K562 (cell line): ENCODE measurements at regions of chr3 and their contacts with region 1.

Region 1: DNA sequence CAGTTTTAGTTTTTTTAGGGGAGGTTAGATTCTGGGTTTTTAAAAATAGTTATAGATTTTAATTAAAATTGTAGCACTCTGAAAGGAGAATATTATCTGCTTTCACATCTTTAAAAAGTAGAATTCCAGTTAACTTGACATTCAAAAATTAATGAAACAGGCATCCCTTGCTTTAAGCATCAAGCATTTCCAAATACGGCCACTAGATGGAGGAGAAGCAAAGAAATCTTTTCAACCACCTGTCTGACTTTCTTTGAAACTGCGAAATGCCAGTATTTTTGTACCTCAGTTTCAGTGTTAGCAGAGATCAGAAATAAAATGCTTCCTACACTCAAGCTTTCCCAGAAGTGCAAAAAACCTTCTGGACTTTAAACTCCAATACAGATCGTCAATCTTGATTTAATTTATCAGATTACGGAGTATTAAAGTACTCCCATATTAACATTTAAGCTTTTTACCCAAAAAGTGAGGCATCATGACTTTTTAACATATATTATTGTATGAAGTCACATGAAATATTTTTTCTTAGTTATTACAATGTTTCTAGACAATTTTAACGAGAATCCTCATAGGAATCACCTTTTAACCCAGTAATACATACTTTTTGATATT is 153.3 kb downstream of the P3H2 start:
- DNase-seq: peak; percentile 19 to 47 (median 32)
- ATAC-seq: 0 out of 3 replicates have a peak, but pooled peaks have one; percentile 36
- H3K4me3 ChIP-seq: no peak overlapping the region
- H3K27ac ChIP-seq: no peak overlapping the region
- H3K4me1 ChIP-seq: no peaks in the 10 kb centered on the region
- H3K27me3 ChIP-seq: no peaks in the 10 kb centered on the region
- CTCF ChIP-seq: peak; percentile 30 to 60 (median 49); a peak in 5 of 6 replicates
- EP300 ChIP-seq: no peak
- POLR2A ChIP-seq: no peak
- RAD21 ChIP-seq: peak; percentile 53 to 76

Region 2: DNA sequence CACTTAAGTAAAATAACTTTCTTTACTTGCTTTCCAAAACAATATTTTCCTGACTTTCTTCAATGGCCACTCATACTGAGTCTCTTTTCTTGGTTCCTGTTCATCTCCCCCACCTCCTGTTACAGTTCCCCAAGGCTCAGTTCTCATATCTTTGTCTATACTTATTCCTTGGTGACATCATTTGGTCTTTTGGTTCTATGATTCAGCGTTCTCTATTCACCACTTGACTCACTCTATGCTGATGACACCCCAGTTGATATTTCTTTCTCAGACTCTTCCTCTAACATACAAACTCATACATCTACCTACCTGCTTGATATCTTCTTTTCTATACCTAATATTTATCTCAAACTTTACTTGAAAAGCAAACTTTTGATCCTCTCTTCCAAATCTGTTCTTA is 238.4 kb after region 1 on chr3:
- CTCF ChIA-PET with region 1: no interaction called
- POLR2A ChIA-PET with region 1: no interaction called
- in situ Hi-C with region 1: no loop called
- intact Hi-C with region 1: loop called (anchors 2 kb)
- DNase-seq: no peak
- ATAC-seq: no peak
- H3K4me3 ChIP-seq: no peak overlapping the region
- H3K27ac ChIP-seq: no peak overlapping the region
- H3K4me1 ChIP-seq: no peaks in the 10 kb centered on the region
- H3K27me3 ChIP-seq: no peaks in the 10 kb centered on the region
- CTCF ChIP-seq: no peak
- EP300 ChIP-seq: no peak
- POLR2A ChIP-seq: no peak
- RAD21 ChIP-seq: no peak

Region 3: DNA sequence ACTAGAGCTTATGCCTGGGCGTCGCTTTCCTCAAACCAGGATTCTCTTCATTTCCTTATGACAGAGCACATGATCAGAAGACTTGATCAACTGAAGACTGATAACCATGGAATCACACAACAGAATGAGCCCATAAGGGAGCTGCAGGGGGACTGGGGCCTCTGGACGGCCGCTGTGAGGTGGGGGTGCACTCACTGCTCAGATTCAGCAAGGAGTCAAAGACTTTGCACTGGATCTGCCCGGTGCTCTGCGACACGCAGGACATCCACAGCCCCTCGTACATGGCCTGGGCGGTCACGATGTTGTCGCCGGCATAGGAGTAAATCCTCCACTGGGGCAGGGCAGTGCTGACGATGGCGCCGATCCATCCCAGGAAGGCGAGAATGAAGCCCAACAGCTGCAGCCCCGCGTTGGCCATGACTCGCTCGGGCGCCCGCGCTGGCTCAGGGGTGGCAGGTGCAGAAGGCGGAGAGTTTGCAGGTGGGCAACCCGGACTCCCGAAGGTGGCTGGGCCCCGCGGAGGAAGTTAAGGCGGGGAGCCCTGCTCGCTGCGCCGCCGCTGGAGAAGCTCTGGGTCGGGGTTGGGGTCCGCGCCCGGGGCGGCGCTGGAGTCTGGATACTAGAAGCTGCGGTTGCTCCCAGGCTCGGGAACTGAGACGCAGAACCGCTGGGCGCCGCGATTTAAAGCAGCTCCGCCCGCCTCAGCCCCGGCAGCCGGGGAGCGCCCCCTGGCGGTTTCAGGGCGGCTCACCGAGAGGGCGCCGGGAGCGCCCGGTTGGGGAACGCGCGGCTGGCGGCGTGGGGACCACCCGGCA is 354.6 kb after region 1 on chr3 and contains the start of gene CLDN1:
- CTCF ChIA-PET with region 1: no interaction called
- POLR2A ChIA-PET with region 1: no interaction called
- in situ Hi-C with region 1: no loop called
- intact Hi-C with region 1: loop called (anchors 5 kb)
- DNase-seq: peak; percentile 14 to 31 (median 30)
- ATAC-seq: peak; percentile 79
- H3K4me3 ChIP-seq: no peak within 1 kb of the TSS
- H3K27ac ChIP-seq: no peak within 1 kb of the TSS
- H3K4me1 ChIP-seq: peaks cover 0 to 5% of the 10 kb centered on the region in 2 experiments; a peak in 1 of 5 replicates
- H3K27me3 ChIP-seq: no peaks in the 10 kb centered on the region
- CTCF ChIP-seq: peak in 2 of 3 experiments; percentile 31 to 41; a peak in 4 of 6 replicates
- EP300 ChIP-seq: no peak
- POLR2A ChIP-seq: no peak
- RAD21 ChIP-seq: peak in 1 of 2 experiments; percentile 39; a peak in 2 of 4 replicates
- polyA plus RNA-seq, gene CLDN1: not detected

Region 4: DNA sequence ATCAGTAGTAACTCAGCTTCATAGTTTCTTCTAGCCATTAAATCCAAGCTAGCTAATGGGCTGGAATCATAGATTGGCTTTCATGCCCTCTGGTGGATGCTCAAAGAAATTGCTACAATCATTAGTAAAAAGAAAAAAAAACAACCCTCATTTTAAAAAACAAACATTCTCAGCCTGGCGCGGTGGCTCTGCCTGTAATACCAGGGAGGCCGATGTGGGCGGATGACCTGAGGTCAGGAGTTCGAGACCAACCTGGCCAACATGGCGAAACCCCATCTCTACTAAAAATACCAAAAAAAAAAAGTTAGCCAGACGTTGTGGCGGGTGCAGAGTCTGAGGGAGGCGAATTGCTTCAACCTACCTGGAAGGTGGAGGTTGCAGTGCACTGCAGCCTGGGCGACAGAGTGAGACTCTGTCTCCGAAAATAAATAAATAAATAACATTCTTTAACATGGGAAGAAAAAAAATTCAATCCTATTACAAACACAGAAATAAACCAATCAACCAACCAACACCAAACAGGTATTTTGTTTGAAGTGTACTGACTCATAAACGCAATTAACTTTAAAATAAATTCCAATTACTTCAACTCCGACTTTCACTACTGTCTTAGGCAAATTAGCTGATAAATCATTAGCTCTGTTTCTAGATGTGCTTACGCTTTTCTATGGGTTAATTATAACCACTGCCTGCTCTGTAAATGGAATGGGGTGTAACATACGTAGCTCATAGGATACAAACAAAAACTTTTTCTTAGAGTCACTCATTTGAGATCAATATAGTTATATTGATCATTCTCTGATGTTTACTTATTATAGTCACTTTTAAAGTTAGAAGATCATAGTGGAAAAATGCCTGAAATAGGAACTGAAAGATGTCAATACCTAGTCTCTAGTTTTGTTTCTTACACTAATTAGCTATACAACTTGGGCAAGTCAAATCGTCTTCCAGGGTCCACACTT is 457.4 kb after region 1 on chr3:
- CTCF ChIA-PET with region 1: no interaction called
- POLR2A ChIA-PET with region 1: no interaction called
- in situ Hi-C with region 1: no loop called
- intact Hi-C with region 1: loop called (anchors 2 kb)
- DNase-seq: peak; percentile 16 to 36 (median 19)
- ATAC-seq: peak; percentile 41
- H3K4me3 ChIP-seq: no peak overlapping the region
- H3K27ac ChIP-seq: no peak overlapping the region
- H3K4me1 ChIP-seq: no peaks in the 10 kb centered on the region
- H3K27me3 ChIP-seq: no peaks in the 10 kb centered on the region
- CTCF ChIP-seq: peak in 2 of 3 experiments; percentile 33 to 47; a peak in 3 of 6 replicates
- EP300 ChIP-seq: no peak
- POLR2A ChIP-seq: no peak
- RAD21 ChIP-seq: peak in 1 of 2 experiments; percentile 24; a peak in 1 of 4 replicates